ENCODE measurements at regions of chr19 and their contacts with region 1.

Region 1: DNA sequence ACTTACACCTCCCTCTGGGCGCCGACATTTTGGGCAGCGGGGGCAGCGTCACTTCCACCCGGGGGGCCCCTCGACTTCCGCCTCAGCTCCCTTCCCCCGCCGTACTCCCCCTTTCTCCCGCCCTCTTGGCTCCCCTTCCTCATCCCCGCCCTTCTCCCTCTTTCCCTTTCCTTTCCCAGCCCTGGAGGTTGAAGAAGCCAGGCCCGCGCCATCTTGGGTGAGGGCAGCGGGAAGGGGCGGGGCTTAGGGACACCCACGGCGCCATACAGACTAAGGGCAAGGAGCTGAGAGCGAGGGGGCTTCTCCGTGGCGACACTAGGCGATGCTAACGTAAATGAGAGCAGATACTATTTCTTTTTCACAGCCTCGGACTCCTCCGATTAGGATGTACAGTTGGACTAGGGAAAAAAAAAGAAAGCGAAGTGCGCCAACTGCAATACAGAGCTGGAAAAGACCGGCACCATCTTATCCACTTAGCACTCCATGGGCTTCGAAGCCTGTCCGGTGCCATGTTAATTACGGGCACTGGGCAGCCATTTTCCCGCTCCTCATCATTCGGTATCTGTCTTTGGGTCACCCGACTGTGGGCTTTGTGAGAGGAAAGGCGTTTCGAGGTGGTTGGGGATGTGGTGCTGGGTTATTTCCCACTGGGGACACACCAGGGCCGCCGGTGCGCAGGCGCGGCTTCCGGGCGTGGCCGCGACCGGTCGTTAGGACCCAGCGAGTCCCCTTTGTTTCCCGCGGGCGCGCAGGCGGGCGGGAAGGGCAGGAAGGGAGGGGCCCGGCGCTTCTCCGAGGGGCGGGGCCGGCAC is at the start of gene FIZ1:
- DNase-seq: peak; percentile 99
- H3K4me3 Mint-ChIP-seq: peak within 1 kb of the TSS; percentile 88
- H3K27ac Mint-ChIP-seq: peak within 1 kb of the TSS; percentile 98
- H3K4me1 Mint-ChIP-seq: peaks cover 33% of the 10 kb centered on the region
- H3K27me3 Mint-ChIP-seq: no peaks in the 10 kb centered on the region
- total RNA-seq, gene FIZ1: 20.4 and 21.4 TPM in 2 replicates

Region 2: DNA sequence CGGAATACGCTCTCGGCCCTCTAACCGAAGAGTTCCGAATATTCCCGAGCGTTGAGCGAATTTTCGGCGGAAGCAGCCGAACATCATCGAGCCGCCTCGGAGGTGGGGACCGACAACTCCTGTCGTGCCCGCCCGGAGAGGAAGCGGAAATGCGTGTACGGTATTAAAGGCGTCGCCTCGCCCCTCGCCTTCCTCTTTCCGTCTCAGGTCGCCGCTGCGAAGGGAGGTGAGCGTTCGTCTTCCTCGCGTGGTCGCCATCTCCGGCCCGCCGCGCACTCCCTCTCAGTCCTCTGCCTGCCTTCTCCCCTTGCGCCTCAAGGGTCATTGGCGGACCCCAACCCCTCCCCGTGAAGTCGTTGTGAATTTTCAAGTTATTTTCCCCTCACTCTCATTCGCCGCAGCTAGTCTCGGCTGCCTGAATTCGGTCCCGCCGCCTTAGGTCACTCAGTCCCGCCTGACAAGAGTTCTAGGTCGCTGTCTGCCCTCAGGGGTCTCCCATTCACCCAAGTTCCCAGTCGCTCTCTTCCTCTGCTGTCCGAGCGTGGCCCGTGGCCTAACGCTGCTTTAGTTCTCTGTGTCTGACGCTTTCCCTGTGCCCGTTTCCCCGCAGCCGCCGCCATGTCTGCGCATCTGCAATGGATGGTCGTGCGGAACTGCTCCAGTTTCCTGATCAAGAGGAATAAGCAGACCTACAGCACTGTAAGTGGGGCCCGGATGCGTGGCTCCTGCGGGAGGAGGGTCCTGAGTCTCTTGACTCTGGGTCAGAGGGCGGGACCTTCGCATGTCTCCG is 213.7 kb before region 1 on chr19 and contains the start of gene RPL28:
- intact Hi-C with region 1: loop called (anchors 5 kb)
- DNase-seq: peak; percentile 100
- H3K4me3 Mint-ChIP-seq: peak within 1 kb of the TSS; percentile 97
- H3K27ac Mint-ChIP-seq: peak within 1 kb of the TSS; percentile 98
- H3K4me1 Mint-ChIP-seq: peaks cover 52% of the 10 kb centered on the region
- H3K27me3 Mint-ChIP-seq: no peaks in the 10 kb centered on the region
- total RNA-seq, gene RPL28: 1,992 and 2,022 TPM in 2 replicates

Region 3: GRCh38 chr19:55580628-55581144 is 19.0 kb before region 1 on chr19 and contains the start of gene ZNF579:
- intact Hi-C with region 1: loop called (anchors 2 kb)
- DNase-seq: peak; percentile 94
- H3K4me3 Mint-ChIP-seq: peak within 1 kb of the TSS; percentile 87
- H3K27ac Mint-ChIP-seq: peak within 1 kb of the TSS; percentile 83
- H3K4me1 Mint-ChIP-seq: peaks cover 18% of the 10 kb centered on the region
- H3K27me3 Mint-ChIP-seq: peaks cover 12% of the 10 kb centered on the region
- total RNA-seq, gene ZNF579: 9.6 and 10.4 TPM in 2 replicates

Region 4: GRCh38 chr19:55624109-55625003 is 24.7 kb after region 1 on chr19 and contains the start of gene ZNF784:
- intact Hi-C with region 1: loop called (anchors 1 kb)
- DNase-seq: peak; percentile 98
- H3K4me3 Mint-ChIP-seq: peak within 1 kb of the TSS; percentile 96
- H3K27ac Mint-ChIP-seq: peak within 1 kb of the TSS; percentile 99
- H3K4me1 Mint-ChIP-seq: peaks cover 43% of the 10 kb centered on the region
- H3K27me3 Mint-ChIP-seq: peaks cover 13% of the 10 kb centered on the region
- total RNA-seq, gene ZNF784: 3.6 and 3.7 TPM in 2 replicates